Left cardiac atrium (tissue), 4 donors: ENCODE measurements at regions of chr1 and their contacts with region 1.

Region 1: GRCh38 chr1:109773146-109773899 is 9.6 kb upstream of the EPS8L3 start:
- DNase-seq: peak; percentile 85
- ATAC-seq: peak; percentile 85 to 88

Region 2: GRCh38 chr1:108559215-108560186 is 1213.8 kb before region 1 on chr1 and contains the start of gene EEIG2:
- intact Hi-C with region 1: no loop called
- DNase-seq: peak; percentile 87
- ATAC-seq: peak; percentile 94 to 96
- total RNA-seq, gene EEIG2: 8.5 to 9.9 TPM

Region 3: DNA sequence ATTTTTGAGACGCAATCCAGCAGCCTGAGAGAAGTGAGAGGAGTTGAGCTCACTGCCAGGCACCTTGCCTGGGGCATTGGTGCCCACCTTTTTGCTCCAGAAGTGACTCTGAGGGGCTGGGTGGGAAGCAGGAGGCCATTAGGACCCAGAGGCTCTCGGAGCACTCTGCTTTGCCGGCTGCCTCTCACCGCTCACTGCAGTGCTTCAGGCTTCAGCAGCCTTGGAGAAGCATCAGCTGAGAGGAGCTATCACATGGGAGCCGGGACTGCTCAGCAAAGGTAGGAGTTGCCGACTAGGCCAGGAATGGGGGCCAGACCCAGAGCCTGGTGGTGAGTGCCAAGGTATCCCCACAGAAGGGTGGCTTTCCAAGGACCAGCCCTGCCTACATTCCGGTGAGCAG is 233.6 kb before region 1 on chr1 and contains the start of gene GPR61:
- intact Hi-C with region 1: loop called in 1 of 2 experiments (anchors 5 kb)
- DNase-seq: no peak
- ATAC-seq: no peak
- total RNA-seq, gene GPR61: 0.55 TPM in 1 of 2 donors, not detected in the other

Region 4: GRCh38 chr1:109643385-109644230 is 129.7 kb before region 1 on chr1:
- intact Hi-C with region 1: loop called (anchors 1 to 5 kb)
- DNase-seq: peak; percentile 84
- ATAC-seq: peak; percentile 89 to 92

Region 5: GRCh38 chr1:109667452-109668122 is 105.7 kb before region 1 on chr1 and contains the start of gene GSTM2:
- intact Hi-C with region 1: no loop called
- DNase-seq: peak; percentile 95
- ATAC-seq: peak; percentile 100
- total RNA-seq, gene GSTM2: 36.7 to 44.4 TPM

Region 6: DNA sequence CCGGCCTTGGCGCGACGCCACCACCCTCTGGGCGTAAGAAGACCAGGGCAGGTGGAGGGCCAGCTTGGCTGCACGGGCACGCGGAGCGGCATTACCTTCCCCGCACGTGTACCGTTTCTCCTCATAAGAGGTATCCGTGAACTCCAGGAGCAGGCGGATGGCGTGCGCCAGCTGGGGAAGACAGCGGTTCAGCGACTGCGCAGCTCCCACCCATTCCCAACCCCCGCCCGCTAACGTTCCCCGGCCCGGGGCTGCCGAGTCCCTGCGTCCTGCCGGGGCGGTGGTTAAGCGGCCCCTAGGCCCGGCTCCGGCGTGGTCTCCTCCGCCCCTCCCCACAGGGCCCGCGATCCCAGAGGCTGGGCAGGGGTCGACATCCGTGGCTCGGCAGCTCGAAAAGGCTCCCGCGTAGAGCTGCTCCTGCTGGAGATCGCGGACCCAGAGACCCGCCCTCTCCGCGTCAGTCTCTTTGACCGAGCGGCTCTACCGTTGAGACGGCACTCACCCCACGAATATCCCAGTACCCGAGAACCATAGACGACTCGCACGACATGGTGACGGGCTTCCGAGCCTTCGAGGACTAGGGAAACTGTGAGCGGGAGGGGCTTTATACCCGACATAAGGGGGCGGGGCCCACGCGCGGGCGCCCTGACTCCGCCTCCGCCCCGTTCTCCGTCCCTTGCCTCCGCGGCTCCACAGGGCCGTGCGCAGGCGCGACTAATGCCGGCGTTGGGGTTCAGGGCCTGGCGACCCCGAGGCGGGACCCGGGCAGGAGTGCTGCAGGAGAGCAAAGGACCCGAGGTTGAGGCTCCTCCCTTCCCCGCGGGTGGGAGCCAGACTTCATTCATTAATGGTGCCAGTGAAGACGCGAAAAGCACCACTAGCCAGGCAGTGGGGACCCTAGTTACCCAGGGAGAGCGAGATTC is 33.3 kb before region 1 on chr1:
- intact Hi-C with region 1: no loop called
- DNase-seq: peak; percentile 83
- ATAC-seq: peak; percentile 98 to 99